Activated CD4-positive, alpha-beta T cell treated with anti-CD3 and anti-CD28 coated beads for 36 hours (primary cell): ENCODE measurements at regions of chr9 and their contacts with region 1.

Region 1: DNA sequence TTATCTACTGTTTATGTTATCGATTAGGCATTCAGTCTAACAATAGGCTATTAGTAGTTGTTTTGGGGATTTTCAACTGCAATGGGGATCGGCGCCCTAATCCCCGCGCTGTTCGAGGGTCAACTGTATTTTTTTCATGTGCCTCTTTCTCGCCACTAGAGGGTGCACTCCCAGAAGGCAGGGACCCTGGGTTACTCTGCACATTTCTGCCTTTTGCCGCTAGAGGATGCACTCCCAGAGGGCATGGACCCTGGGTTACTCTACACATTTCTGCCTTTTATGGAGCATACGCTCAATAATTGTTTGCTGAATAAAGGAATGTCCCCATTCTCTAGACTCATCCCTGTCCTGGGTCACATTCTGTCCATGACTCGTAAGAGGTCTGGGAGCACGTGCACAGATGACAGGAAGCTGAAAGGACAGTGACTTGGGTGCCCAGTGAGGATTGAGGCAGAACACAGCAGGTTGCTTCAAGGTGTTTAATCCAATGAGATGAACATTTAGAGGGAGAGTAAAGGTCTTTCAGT is 27.9 kb upstream of the RECK start:
- DNase-seq: peak; percentile 77
- ATAC-seq: peak; percentile 87
- H3K4me3 Mint-ChIP-seq: no peak overlapping the region
- H3K27ac Mint-ChIP-seq: no peak overlapping the region
- H3K4me1 Mint-ChIP-seq: peaks cover 23% of the 10 kb centered on the region
- H3K27me3 Mint-ChIP-seq: peaks cover 24% of the 10 kb centered on the region

Region 2: GRCh38 chr9:35996358-35996975 is 12.4 kb before region 1 on chr9:
- CTCF ChIA-PET with region 1: interaction called, 18 read pairs
- POLR2A ChIA-PET with region 1: no interaction called
- intact Hi-C with region 1: no loop called
- DNase-seq: no peak
- ATAC-seq: no peak
- H3K4me3 Mint-ChIP-seq: no peak overlapping the region
- H3K27ac Mint-ChIP-seq: no peak overlapping the region
- H3K4me1 Mint-ChIP-seq: no peaks in the 10 kb centered on the region
- H3K27me3 Mint-ChIP-seq: peaks cover 19% of the 10 kb centered on the region

Region 3: DNA sequence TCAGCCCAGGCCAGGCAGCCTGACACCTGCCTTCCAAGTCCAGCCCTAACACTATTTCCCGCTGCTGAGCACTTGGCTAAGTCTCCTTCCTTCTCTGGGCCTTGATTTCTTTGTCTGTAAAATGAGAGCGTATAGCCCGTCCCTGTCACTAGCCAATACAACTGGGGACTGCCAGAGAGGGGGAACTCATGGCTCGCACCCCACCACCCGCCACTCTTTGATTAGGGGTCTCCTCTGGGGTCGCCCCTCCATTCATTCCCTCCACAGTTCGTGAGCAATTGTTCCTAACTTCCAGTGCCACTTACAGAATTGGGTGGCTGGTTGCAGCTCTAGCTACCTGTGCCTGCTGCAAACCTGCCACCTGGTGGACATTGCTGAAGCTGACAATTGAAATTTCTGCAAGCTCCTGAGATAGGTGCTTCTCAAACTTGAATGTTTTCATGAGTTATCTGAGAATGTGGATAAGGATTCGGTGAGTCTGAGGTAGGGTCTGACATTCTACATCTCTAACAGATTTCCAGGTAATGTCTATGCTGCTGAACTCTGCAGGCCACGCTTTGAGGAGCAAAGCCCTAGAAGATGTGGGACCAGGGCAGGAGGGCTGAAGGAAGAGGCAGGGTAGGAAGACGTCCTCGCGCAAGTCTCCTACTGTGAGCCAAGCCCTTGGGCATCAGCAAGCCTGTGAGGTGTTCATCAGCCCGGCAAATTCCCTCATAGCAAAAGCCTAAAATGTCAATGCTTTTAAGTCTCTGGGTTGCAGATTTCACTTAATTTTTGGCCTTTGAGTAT is 14.6 kb after region 1 on chr9:
- CTCF ChIA-PET with region 1: interaction called, 73 read pairs
- POLR2A ChIA-PET with region 1: no interaction called
- intact Hi-C with region 1: loop called in 1 of 2 experiments (anchors 1 kb)
- DNase-seq: peak; percentile 83
- ATAC-seq: peak; percentile 90
- H3K4me3 Mint-ChIP-seq: no peak overlapping the region
- H3K27ac Mint-ChIP-seq: no peak overlapping the region
- H3K4me1 Mint-ChIP-seq: no peaks in the 10 kb centered on the region
- H3K27me3 Mint-ChIP-seq: no peaks in the 10 kb centered on the region

Region 4: DNA sequence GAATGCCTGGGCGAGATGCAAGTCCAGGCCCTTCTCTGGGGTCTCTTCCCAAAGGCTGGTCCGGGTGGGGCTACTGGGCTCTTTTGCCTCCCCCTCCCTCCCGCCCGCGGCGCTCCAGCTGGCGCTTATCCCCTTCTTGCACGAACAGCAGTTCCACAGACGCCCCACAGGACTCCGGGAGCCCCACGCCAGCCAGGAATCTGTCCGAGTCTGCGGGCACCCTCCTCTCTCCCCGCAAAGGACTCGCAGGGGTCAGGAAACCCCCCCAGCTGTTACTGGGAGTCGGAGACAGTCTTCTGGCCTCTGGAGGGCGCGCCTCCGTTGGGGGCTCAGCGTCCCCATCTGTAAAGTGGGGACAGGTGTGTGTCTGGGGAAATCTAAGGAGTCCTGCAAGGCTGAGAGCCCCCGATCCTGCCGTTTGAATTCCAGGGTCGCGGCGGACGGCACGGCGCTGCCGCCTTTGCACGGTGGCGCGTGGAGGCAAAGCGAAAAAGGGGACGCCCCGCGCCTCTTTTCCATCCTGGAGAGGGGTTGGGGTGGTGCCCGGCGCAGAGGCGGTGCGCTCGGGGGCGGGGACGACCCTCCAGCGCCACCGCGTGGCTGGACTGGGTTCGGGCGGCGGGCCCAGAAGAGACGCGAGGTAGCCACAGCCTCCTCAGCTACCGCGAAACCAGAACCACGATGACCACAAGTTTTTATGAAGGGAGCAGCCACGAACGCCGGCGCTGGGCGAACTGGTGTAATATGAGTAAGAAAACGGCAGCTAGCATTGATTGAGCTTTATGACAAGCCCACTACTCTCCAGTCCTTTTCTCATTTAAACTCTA is 157.5 kb after region 1 on chr9:
- CTCF ChIA-PET with region 1: interaction called, 5 read pairs
- POLR2A ChIA-PET with region 1: no interaction called
- intact Hi-C with region 1: loop called in 1 of 2 experiments (anchors 1 kb)
- DNase-seq: peak; percentile 90
- ATAC-seq: peak; percentile 97
- H3K4me3 Mint-ChIP-seq: peak overlapping the region; percentile 69
- H3K27ac Mint-ChIP-seq: peak overlapping the region; percentile 31
- H3K4me1 Mint-ChIP-seq: peaks cover 6% of the 10 kb centered on the region
- H3K27me3 Mint-ChIP-seq: no peaks in the 10 kb centered on the region